ENCODE measurements at regions of chr14 and their contacts with region 1.

Region 1: GRCh38 chr14:30330445-30330844 is 228.5 kb upstream of the G2E3 start:
- DNase-seq: no peak
- H3K4me3 ChIP-seq: no peak overlapping the region
- H3K27ac ChIP-seq: no peak overlapping the region
- H3K4me1 ChIP-seq: no peaks in the 10 kb centered on the region
- H3K27me3 ChIP-seq: no peaks in the 10 kb centered on the region
- CTCF ChIP-seq: peak in 2 of 3 experiments; percentile 10 to 38; a peak in 2 of 4 replicates
- EP300 ChIP-seq: no peak
- POLR2A ChIP-seq: no peak
- RAD21 ChIP-seq: peak in 1 of 2 experiments; percentile 23; a peak in 1 of 4 replicates

Region 2: DNA sequence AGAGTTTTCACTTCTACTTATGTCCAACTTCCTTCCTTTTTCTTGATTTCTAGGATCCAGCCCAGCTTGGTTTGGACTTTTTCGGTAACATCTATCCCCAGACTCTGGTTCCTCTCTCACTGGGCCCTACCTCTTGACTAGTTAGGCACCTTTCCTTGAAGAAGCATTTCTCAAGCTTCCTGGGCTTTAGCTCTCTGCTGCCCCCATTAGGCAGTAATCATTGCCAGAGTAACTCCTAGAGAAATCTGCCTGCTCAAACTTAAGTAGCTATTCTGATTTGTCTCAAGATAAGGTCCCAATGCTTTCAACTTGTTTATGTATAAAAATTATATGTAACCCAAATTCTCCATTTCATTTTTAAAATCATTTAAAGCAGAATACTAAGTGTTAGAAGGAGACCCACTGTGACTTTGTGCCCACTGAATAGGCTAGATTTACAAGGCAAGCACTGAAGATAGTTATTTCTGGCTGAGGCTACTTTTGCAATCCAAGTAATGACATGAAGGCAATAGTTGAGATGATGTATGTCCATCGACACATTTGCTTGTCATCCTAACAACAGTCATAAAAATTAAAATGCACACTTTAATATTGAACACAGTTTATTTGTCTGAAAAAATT is 46.5 kb before region 1 on chr14:
- CTCF ChIA-PET with region 1: interaction called, 10 read pairs
- POLR2A ChIA-PET with region 1: no interaction called
- DNase-seq: peak; percentile 34 to 77
- H3K4me3 ChIP-seq: no peak overlapping the region
- H3K27ac ChIP-seq: no peak overlapping the region
- H3K4me1 ChIP-seq: no peaks in the 10 kb centered on the region
- H3K27me3 ChIP-seq: no peaks in the 10 kb centered on the region
- CTCF ChIP-seq: peak in 2 of 3 experiments; percentile 73 to 80; a peak in 3 of 4 replicates
- EP300 ChIP-seq: no peak
- POLR2A ChIP-seq: no peak
- RAD21 ChIP-seq: peak; percentile 62 to 70

Region 3: GRCh38 chr14:30317729-30318128 is 12.7 kb before region 1 on chr14:
- CTCF ChIA-PET with region 1: interaction called, 12 read pairs
- POLR2A ChIA-PET with region 1: no interaction called
- DNase-seq: no peak
- H3K4me3 ChIP-seq: no peak overlapping the region
- H3K27ac ChIP-seq: no peak overlapping the region
- H3K4me1 ChIP-seq: no peaks in the 10 kb centered on the region
- H3K27me3 ChIP-seq: no peaks in the 10 kb centered on the region
- CTCF ChIP-seq: no peak
- EP300 ChIP-seq: no peak
- POLR2A ChIP-seq: no peak
- RAD21 ChIP-seq: no peak

Measured in H1 (cell line).